ENCODE measurements at regions of chr2 and their contacts with region 1.

Region 1: GRCh38 chr2:201231781-201232466 is 28.4 kb upstream of the CASP8 start:
- DNase-seq: peak; percentile 93

Region 2: DNA sequence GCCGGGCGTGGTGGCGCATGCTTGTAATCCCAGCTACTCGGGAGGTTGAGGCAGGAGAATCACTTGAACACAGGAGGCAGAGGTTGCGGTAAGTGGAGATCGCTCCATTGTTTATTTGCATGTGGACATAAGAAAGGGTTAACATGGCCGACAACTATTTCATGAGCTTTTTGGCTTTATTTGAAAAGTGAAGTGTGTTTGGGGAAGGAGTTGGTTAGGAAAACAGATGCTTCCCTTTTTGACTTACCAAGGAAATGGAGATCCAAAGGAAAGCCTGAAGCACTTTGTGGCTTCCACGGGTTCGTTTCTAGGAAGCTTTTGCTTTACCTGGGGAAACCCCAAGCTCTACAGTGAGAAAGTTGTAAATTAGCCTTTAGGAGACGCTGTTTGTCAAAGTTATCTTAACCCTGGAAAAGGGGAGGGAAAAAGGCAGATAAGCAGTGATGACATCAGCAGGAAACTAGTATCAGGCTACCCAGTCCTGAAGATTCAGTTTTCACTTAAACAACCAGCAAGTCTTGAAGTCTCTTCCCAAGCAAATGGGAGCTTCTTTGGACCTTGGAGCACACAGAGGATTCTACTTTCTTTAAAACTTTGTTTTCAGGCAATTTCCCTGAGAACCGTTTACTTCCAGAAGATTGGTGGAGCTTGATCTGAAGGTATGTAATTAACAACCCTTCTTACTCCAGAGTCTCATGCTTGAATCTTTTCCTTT is 49.1 kb before region 1 on chr2 and contains the start of gene CASP10:
- intact Hi-C with region 1: loop called (anchors 2 kb)
- DNase-seq: no peak
- total RNA-seq, gene CASP10: 5.0 TPM

Measured in cardiac septum (tissue), 1 donor.